Endothelial cell of umbilical vein (primary cell): ENCODE measurements at regions of chr9 and their contacts with region 1.

Region 1: GRCh38 chr9:17810728-17811571 is 232.1 kb downstream of the SH3GL2 start:
- DNase-seq: peak; percentile 59
- H3K4me3 ChIP-seq: no peak overlapping the region
- H3K27ac ChIP-seq: no peak overlapping the region
- H3K4me1 ChIP-seq: no peaks in the 10 kb centered on the region
- H3K27me3 ChIP-seq: peaks cover 8 to 9% of the 10 kb centered on the region in 2 experiments
- CTCF ChIP-seq: peak; percentile 63 to 69
- POLR2A ChIP-seq: no peak

Region 2: DNA sequence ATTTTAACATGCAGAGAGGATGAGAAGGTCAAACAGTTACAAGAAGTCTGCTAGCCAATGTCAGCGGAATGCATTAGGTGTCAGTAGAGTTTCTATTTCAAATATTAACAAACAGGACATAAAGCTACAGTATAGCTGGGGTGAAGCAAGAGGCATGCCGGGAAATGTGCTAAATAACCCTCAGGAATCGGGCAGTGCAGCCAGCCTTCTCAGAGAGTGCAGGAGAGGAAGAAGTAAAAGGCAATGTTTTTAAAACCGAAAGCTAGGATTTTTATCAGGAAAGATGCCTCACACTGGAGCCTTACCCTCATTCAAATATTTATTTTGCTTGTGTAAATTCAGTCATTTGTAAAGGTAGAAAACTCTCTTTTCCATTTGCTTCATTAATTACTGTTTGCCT is 291.2 kb before region 1 on chr9:
- CTCF ChIA-PET with region 1: interaction called, 13 read pairs
- POLR2A ChIA-PET with region 1: no interaction called
- dilution Hi-C with region 1: no loop called
- intact Hi-C with region 1: no loop called
- DNase-seq: peak; percentile 30
- H3K4me3 ChIP-seq: no peak overlapping the region
- H3K27ac ChIP-seq: no peak overlapping the region
- H3K4me1 ChIP-seq: no peaks in the 10 kb centered on the region
- H3K27me3 ChIP-seq: peaks cover 0 to 2% of the 10 kb centered on the region in 2 experiments
- CTCF ChIP-seq: no peak
- POLR2A ChIP-seq: no peak

Region 3: GRCh38 chr9:17832812-17833211 is 21.9 kb after region 1 on chr9:
- CTCF ChIA-PET with region 1: interaction called, 17 read pairs
- POLR2A ChIA-PET with region 1: no interaction called
- dilution Hi-C with region 1: no loop called
- intact Hi-C with region 1: no loop called
- DNase-seq: no peak
- H3K4me3 ChIP-seq: no peak overlapping the region
- H3K27ac ChIP-seq: no peak overlapping the region
- H3K4me1 ChIP-seq: no peaks in the 10 kb centered on the region
- H3K27me3 ChIP-seq: no peaks in the 10 kb centered on the region
- CTCF ChIP-seq: no peak
- POLR2A ChIP-seq: no peak

Region 4: GRCh38 chr9:17928228-17928627 is 117.3 kb after region 1 on chr9:
- CTCF ChIA-PET with region 1: no interaction called
- POLR2A ChIA-PET with region 1: no interaction called
- dilution Hi-C with region 1: no loop called
- intact Hi-C with region 1: no loop called
- DNase-seq: no peak
- H3K4me3 ChIP-seq: no peak overlapping the region
- H3K27ac ChIP-seq: no peak overlapping the region
- H3K4me1 ChIP-seq: no peaks in the 10 kb centered on the region
- H3K27me3 ChIP-seq: no peaks in the 10 kb centered on the region
- CTCF ChIP-seq: no peak
- POLR2A ChIP-seq: no peak

Region 5: DNA sequence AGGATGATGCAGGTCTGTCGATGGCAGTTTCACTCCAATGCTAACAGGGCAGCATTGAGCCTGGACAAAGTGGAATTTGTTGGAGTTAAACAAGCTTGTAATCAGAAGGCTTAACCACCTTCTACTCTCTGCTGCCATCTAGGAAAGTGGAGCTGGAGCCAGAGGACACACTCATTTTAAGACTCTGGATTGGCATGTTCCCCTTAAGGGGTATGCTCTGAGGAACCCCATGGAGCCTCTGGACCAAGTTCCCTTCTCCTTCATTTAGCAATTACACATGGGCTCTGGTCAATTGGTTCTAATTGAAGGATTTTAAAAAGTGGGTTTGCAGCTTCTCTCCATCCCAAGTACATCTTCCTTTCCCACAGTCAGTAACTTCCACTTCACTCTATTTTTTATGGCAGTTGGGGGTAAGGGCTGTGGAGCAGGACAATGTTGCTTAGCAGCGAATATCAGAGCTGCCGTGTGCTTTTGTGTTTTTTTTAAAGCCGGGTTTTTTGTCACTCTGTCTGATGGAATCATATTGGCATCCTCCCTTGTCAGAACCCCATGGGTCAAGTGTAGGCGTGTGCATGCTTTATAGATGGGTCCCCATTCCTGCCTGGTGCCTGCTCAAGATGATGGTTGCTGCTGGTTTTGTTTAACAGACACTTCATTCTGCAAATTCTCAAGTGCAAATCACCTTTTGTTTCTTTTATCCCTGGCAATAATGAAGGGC is 332.2 kb after region 1 on chr9:
- CTCF ChIA-PET with region 1: interaction called, 13 read pairs
- POLR2A ChIA-PET with region 1: no interaction called
- dilution Hi-C with region 1: no loop called
- intact Hi-C with region 1: no loop called
- DNase-seq: peak; percentile 2
- H3K4me3 ChIP-seq: no peak overlapping the region
- H3K27ac ChIP-seq: no peak overlapping the region
- H3K4me1 ChIP-seq: no peaks in the 10 kb centered on the region
- H3K27me3 ChIP-seq: peaks cover 0 to 6% of the 10 kb centered on the region in 2 experiments
- CTCF ChIP-seq: peak in 1 of 2 donors; percentile 8
- POLR2A ChIP-seq: no peak

Region 6: DNA sequence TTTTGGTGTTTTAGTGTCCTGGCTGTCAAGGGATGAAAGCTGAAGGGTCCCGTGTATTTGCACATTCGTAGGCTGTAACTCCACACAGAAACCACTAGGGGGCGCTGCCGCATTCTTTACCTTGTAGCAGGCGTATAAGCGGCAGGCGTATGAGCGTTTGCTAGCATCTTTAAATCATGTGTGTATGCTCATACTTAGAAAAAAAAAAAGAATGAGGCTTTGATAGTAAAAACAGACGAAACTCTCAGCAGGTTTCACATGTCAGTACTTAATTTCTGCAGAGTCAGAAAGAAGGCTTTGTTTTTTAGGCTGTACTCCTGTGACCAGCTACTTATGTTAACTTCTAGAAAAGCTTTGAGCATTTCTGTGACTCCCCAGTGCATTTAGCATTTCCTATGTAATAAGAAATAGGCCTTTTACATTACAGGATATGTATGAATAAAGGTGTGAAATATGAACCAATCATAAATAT is 444.2 kb after region 1 on chr9:
- CTCF ChIA-PET with region 1: interaction called, 12 read pairs
- POLR2A ChIA-PET with region 1: no interaction called
- dilution Hi-C with region 1: no loop called
- intact Hi-C with region 1: no loop called
- DNase-seq: peak; percentile 84
- H3K4me3 ChIP-seq: no peak overlapping the region
- H3K27ac ChIP-seq: no peak overlapping the region
- H3K4me1 ChIP-seq: peaks cover 2% of the 10 kb centered on the region
- H3K27me3 ChIP-seq: no peaks in the 10 kb centered on the region
- CTCF ChIP-seq: peak; percentile 76 to 81
- POLR2A ChIP-seq: no peak

Region 7: DNA sequence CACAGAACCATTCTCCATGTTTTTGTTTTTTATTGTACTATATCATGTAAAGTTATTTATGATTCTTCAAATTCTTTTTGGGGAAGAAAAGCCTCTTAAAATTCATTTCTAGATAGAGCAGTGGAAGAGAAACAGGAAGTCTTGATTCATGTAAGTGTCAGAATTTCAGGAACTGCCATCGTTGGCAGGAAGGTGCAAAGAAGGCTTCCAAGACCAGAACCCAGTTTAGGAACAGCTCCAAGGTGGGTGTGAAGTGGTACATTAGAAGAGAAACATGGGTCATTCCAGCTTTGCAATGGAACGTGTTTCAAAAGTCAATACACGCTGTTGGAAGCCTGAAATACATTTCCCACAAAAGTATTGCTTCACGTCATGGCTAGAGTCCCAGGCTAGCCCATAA is 1207.3 kb after region 1 on chr9:
- CTCF ChIA-PET with region 1: interaction called, 136 read pairs
- POLR2A ChIA-PET with region 1: interaction called, 3 read pairs
- dilution Hi-C with region 1: no loop called
- intact Hi-C with region 1: loop called (anchors 5 kb)
- DNase-seq: no peak
- H3K4me3 ChIP-seq: no peak overlapping the region
- H3K27ac ChIP-seq: no peak overlapping the region
- H3K4me1 ChIP-seq: no peaks in the 10 kb centered on the region
- H3K27me3 ChIP-seq: no peaks in the 10 kb centered on the region
- CTCF ChIP-seq: no peak
- POLR2A ChIP-seq: no peak

Region 8: GRCh38 chr9:19048966-19049916 is 1238.3 kb after region 1 on chr9 and contains the start of gene RRAGA:
- CTCF ChIA-PET with region 1: interaction called, 11 read pairs
- POLR2A ChIA-PET with region 1: no interaction called
- dilution Hi-C with region 1: no loop called
- intact Hi-C with region 1: no loop called
- DNase-seq: peak; percentile 97
- H3K4me3 ChIP-seq: peak within 1 kb of the TSS; percentile 48 to 76 (median 53)
- H3K27ac ChIP-seq: peak within 1 kb of the TSS; percentile 69
- H3K4me1 ChIP-seq: peaks cover 16% of the 10 kb centered on the region
- H3K27me3 ChIP-seq: no peaks in the 10 kb centered on the region
- CTCF ChIP-seq: peak; percentile 81 to 91
- POLR2A ChIP-seq: peak; percentile 97
- total RNA-seq, gene RRAGA: 78.5 and 81.2 TPM in 2 replicates